Uterus (tissue), 4 donors: ENCODE measurements at regions of chr3 and their contacts with region 1.

Region 1: DNA sequence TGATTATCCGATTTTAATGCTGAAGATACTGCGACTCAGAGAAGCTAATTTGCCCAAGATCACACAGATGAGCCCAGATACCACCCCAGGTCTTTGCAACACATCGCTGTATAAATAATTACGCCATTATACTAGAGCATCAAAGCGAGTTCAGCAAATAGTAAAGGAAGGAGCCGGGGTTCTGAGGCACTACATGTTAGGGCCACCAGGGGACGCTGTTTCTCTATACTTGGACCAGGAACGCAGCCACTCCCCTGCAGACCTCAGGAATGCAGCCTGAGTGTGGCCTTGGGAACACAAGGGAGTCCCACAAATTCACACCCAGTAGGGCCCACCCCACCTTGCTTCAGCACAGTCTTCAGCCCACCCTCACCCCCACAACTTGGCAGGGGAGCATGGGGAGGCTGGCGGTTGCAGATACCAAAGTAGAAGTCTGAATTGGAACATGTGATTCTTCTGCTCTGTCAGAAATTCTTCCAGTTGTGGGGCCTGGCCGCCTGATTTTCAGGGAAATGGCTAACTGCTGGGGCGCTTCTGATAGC is 57.8 kb upstream of the RYK start:
- DNase-seq: peak; percentile 88 to 89
- H3K4me3 ChIP-seq: no peak overlapping the region
- H3K27ac ChIP-seq: peak overlapping the region; percentile 81 to 84
- H3K4me1 ChIP-seq: peaks cover 0 to 4% of the 10 kb centered on the region in 2 donors
- H3K27me3 ChIP-seq: no peaks in the 10 kb centered on the region
- CTCF ChIP-seq: peak; percentile 99 to 100 (median 100)
- POLR2A ChIP-seq: no peak

Region 2: DNA sequence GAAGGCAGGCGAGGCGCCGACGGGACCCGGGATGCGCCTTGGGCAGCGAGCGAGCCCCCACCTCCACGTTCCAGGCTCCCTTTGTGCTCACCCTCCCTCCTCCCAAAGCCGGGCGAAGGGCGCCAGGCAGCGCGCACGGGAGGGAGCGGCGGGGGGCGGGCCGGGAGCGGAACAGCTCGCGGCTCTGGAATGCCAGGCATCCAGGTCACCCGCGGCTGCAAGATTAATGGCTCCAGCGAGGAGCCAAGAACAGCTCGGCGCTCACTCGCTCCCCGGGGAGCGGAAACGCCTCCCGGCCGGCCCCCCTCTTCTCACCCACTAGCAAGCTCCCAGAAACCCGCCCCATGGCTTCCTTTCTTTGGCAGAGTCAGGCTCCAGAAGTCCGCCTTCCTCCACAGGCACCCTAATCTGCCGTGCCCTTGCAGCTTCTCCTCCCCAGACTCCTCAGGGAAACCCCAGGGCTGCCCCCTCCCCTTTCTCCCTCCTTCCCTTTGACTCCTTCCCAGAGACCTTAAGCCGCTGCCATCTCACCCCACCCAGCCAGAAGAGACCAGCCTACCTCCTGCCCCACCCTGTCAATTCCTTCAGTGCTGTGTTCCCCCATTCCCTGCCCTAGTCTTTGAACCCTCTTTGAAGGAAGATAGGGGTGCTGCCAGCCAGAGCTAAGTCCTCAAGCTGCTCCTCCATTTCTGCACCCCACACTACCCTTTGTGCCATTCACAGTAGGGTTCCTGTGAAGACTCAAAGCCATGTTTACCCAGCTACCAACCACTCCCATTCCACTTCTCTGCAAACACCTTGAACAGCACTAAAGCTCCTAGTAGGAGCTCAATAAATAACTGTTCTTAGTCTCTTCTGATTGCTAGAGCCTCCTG is 55.9 kb after region 1 on chr3:
- intact Hi-C with region 1: loop called (anchors 5 kb)
- DNase-seq: peak; percentile 96 to 97
- H3K4me3 ChIP-seq: peak overlapping the region; percentile 11 to 27
- H3K27ac ChIP-seq: peak overlapping the region; percentile 97 to 99
- H3K4me1 ChIP-seq: peaks cover 5 to 65% of the 10 kb centered on the region in 2 donors
- H3K27me3 ChIP-seq: no peaks in the 10 kb centered on the region
- CTCF ChIP-seq: no peak
- POLR2A ChIP-seq: no peak

Region 3: DNA sequence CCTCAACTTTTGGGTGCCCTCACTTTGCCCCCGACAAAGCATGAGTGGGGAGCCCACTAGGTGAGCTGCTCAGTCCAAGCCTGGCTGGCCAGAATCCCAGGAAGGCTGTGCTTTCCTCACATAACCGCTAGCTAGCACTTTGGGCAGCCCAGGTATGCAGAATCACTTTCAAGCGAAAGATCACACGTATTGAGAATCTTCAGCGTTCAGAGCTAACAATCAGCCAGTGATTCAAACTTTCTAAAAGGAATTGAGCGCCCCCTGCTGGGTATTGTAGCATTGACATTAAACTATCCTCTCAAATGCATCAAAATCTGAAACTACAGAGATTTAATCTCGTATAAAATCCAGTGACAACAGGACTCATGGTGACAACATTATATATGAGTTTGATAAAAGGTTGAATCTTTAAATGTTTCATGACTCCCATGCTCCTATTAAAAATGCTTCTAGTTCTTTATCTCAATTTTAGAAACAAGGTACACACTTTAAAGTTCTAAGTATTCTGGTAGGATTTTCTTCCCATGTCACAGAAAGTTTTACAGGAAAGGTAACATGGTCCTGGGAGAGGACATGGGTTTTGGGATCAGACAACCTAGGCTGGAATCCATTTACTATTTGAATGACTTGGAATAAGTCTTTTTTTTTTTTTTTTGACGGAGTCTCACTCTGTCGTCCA is 165.6 kb after region 1 on chr3:
- intact Hi-C with region 1: loop called (anchors 2 kb)
- DNase-seq: peak; percentile 68 to 87
- H3K4me3 ChIP-seq: no peak overlapping the region
- H3K27ac ChIP-seq: no peak overlapping the region
- H3K4me1 ChIP-seq: no peaks in the 10 kb centered on the region
- H3K27me3 ChIP-seq: no peaks in the 10 kb centered on the region
- CTCF ChIP-seq: peak; percentile 80 to 87 (median 82)
- POLR2A ChIP-seq: no peak